GM10248 (cell line): ENCODE measurements at regions of chr9 and their contacts with region 1.

Region 1: DNA sequence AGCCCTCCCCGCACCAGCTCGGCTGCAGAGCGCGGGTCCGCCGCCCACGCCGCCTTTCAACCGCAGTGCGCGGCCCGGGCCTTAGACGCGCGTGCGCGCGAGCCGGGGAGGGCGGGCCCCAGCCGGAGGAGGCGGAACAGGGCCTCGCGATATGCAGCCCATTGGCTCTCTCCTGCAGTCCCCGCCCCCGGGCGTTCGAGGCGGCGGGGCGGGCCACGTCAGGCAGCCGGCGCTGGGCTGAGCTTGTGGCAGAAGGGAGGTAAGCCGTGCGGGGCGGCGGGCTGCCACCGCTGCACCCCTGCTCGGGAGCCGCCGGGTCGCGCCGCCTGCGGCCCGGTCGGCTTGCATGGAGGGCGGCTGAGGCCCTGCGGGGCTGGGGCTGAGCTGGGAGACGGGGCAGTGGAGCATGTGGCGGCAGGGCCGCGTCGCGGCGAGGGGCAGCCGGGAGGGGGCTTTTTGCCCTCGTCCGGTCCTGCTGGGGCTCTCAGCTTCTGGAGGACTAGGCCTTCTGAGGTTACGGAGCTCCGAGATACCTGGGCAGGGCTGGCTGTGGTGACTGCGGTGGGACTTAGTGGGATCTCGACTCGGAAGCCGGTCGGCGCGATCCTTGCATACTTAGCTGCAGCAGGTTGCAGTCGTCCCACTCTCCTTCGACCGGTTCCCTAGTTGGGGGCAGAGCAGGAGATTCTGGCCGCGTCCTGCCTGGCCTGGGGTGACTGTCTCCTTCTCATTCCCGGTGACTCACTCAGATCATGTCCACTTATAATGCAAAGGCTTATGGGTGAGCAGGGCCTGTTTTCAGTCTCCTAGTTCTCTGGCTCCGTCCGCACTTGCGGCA is at the start of gene FOCAD:
- DNase-seq: peak; percentile 98
- CTCF ChIP-seq: no peak

Region 2: DNA sequence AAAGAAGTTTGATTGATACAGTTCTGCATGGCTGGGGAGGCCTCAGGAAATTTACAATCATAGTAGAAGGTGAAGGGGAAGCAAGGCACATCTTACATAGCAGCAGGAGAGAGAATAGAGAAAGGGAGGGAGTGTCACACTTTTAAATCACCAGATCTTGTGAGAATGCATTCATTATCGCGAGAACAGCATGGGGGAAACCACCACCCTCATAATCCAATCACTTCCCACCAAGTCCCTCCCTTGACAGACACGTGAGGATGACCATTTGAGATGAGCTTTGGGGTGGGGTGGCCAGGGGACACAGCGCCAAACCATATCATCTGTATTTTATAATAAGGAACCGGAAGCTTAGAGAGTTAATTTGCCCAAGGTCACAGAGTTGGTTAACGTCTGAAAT is 13.9 kb before region 1 on chr9:
- CTCF ChIA-PET with region 1: interaction called, 12 read pairs
- POLR2A ChIA-PET with region 1: no interaction called
- DNase-seq: no peak
- CTCF ChIP-seq: no peak

Region 3: DNA sequence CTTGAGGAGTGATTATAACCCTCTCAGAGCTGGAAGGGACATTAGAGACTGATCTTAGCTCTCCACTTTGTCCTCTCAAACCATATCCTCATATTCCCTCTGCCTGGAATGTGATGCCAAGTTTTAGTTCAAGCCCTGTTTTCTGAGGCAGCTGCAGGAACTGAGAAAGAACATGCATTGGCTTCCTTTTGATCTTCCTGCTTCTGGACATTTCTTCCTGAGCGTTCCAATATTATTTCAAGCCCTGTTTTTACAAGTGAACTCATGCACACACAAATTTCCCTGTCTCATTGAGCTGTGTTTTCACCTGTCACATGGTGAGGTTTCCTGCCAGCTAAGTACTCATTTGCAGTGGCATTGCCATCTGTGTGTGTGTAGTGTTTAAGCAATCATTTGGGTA is 16.8 kb after region 1 on chr9:
- CTCF ChIA-PET with region 1: interaction called, 16 read pairs
- POLR2A ChIA-PET with region 1: interaction called, 3 read pairs
- DNase-seq: no peak
- CTCF ChIP-seq: no peak

Region 4: GRCh38 chr9:20989923-20990341 is 305.7 kb after region 1 on chr9:
- CTCF ChIA-PET with region 1: no interaction called
- POLR2A ChIA-PET with region 1: no interaction called
- DNase-seq: no peak
- CTCF ChIP-seq: no peak